BJ (cell line): ENCODE measurements at regions of chr11 and their contacts with region 1.

Region 1: GRCh38 chr11:77994412-77995362 is at the start of gene INTS4:
- DNase-seq: peak; percentile 100
- H3K4me3 ChIP-seq: peak within 1 kb of the TSS; percentile 53
- H3K27me3 ChIP-seq: no peaks in the 10 kb centered on the region
- CTCF ChIP-seq: no peak
- polyA plus RNA-seq, gene INTS4: 16.8 and 18.9 TPM in 2 replicates

Region 2: DNA sequence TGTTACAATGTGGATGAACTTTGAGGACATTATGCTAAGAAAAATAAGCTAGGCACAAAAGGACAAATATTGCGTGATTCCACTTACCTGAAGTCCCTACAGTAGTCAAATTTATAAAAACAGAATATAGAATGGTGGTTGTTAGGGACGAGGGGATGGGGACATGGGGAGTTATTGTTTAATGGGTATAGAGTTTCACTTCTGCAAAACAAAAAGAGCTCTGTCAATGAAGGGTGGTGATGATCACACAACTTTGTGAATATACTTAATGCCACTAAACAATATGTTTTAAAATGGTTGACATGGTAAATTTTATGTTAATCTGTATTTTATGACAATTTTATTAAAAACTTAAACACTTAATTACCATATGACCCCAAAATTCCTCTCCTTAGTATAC is 26.4 kb before region 1 on chr11:
- CTCF ChIA-PET with region 1: no interaction called
- POLR2A ChIA-PET with region 1: no interaction called
- DNase-seq: no peak
- H3K4me3 ChIP-seq: no peak overlapping the region
- H3K27me3 ChIP-seq: no peaks in the 10 kb centered on the region
- CTCF ChIP-seq: no peak

Region 3: GRCh38 chr11:78045851-78046485 is 51.3 kb after region 1 on chr11:
- CTCF ChIA-PET with region 1: interaction called, 11 read pairs
- POLR2A ChIA-PET with region 1: no interaction called
- DNase-seq: no peak
- H3K4me3 ChIP-seq: peak overlapping the region; percentile 29
- H3K27me3 ChIP-seq: no peaks in the 10 kb centered on the region
- CTCF ChIP-seq: peak; percentile 76

Region 4: DNA sequence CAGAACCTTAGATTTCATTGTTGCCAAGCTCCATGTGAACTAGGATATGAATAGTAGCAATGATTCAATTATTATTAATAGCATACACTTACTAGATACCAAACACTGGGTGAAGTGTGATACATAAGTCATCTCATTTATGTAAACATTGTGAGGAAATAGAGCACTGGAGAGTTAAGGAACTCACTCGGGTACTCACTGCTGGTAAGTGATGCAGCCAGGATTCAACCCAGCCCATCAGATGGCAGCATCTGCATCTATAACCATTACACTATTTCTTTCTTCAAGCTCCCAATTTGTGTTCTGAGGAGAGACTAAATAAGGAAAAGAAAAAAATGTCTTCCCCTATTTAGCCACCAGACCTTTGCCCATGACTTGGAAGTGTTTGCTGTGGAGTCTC is 155.0 kb after region 1 on chr11:
- CTCF ChIA-PET with region 1: no interaction called
- POLR2A ChIA-PET with region 1: no interaction called
- DNase-seq: no peak
- H3K4me3 ChIP-seq: no peak overlapping the region
- H3K27me3 ChIP-seq: no peaks in the 10 kb centered on the region
- CTCF ChIP-seq: peak; percentile 43